GM10248 (cell line): ENCODE measurements at regions of chr3 and their contacts with region 1.

Region 1: GRCh38 chr3:197791113-197791891 is at the start of gene LRCH3:
- DNase-seq: peak; percentile 91
- CTCF ChIP-seq: no peak

Region 2: GRCh38 chr3:197801891-197802778 is 10.8 kb after region 1 on chr3:
- CTCF ChIA-PET with region 1: interaction called, 17 read pairs
- POLR2A ChIA-PET with region 1: no interaction called
- DNase-seq: no peak
- CTCF ChIP-seq: peak; percentile 44

Region 3: DNA sequence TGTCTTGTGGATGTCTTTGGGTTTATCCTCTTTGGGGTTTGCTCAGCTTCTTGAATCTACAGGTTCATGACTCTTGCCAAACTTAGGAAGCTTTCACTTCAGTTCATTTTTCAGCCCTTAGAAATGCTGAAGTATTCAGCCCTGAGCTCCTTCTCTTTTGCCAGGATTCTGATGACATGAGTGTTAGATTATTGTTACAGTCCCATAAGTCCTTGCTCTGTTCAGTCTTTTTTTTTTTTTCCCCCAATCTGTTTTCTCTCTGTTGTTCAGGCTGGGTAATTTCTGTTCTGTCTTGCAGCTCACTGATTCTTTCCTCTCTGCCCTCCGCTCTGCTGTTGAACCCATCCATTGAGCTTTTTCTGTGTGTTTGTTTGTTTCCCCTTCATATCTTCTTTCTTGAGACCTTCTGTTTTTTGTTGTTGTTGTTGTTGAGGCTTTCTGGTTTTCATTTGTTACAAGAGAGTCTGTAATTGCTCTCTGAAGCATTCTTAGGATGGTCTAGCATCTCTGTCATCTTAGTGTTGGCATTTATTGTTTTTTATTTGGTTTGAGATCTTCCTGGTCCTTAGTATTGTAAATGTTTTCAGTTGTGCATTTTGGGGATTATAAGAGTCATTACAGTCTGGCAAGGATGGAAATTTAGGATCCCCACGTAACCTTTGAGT is 18.2 kb after region 1 on chr3:
- CTCF ChIA-PET with region 1: interaction called, 10 read pairs
- POLR2A ChIA-PET with region 1: no interaction called
- DNase-seq: no peak
- CTCF ChIP-seq: no peak

Region 4: GRCh38 chr3:197878427-197878826 is 87.1 kb after region 1 on chr3:
- CTCF ChIA-PET with region 1: no interaction called
- POLR2A ChIA-PET with region 1: no interaction called
- DNase-seq: peak; percentile 46
- CTCF ChIP-seq: no peak

Region 5: GRCh38 chr3:197975311-197975710 is 184.0 kb after region 1 on chr3:
- CTCF ChIA-PET with region 1: no interaction called
- POLR2A ChIA-PET with region 1: no interaction called
- DNase-seq: no peak
- CTCF ChIP-seq: no peak